Brain microvascular endothelial cell (primary cell): ENCODE measurements at regions of chr15 and their contacts with region 1.

Region 1: DNA sequence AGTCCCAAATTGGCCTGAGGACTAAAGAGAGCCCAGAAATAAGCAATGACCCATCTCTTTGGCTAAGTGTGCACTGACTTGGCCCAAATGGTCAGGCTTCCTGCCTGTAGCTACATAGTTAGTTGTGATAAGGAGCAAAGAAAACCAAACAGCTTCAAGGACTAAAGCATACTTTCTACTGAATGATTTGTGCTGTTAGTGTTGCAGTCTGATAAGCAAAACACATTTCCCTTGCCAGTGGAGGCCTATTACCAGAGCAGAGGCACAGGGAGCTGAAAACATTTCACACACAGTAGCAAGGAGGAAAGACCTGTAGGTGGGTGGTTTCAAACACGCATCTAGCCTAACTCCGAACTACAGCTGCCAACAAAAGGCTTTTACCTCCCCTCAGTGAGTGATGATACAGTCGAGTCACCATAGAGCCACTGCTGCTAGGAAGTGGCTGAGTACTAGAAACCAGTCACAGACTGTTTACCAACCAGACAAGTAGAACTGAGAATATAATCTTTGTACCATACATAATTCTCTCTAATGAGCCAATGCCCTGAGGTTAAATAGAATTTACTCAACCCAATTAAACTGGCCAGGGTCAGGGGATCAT is 222.3 kb upstream of the THBS1 start:
- DNase-seq: peak; percentile 32
- H3K4me3 ChIP-seq: no peak overlapping the region
- H3K27ac ChIP-seq: peak overlapping the region; percentile 21
- H3K27me3 ChIP-seq: no peaks in the 10 kb centered on the region
- CTCF ChIP-seq: no peak

Region 2: GRCh38 chr15:39195988-39196486 is 162.5 kb before region 1 on chr15:
- in situ Hi-C with region 1: loop called (anchors 25 kb)
- DNase-seq: peak; percentile 55
- H3K4me3 ChIP-seq: no peak overlapping the region
- H3K27ac ChIP-seq: peak overlapping the region; percentile 50
- H3K27me3 ChIP-seq: no peaks in the 10 kb centered on the region
- CTCF ChIP-seq: no peak

Region 3: GRCh38 chr15:39517122-39517855 is 158.7 kb after region 1 on chr15:
- in situ Hi-C with region 1: no loop called
- DNase-seq: no peak
- H3K4me3 ChIP-seq: no peak overlapping the region
- H3K27ac ChIP-seq: no peak overlapping the region
- H3K27me3 ChIP-seq: no peaks in the 10 kb centered on the region
- CTCF ChIP-seq: no peak

Region 4: GRCh38 chr15:39616731-39617455 is 258.4 kb after region 1 on chr15:
- in situ Hi-C with region 1: no loop called
- DNase-seq: no peak
- H3K4me3 ChIP-seq: no peak overlapping the region
- H3K27ac ChIP-seq: no peak overlapping the region
- H3K27me3 ChIP-seq: no peaks in the 10 kb centered on the region
- CTCF ChIP-seq: no peak